ENCODE measurements at regions of chr6 and their contacts with region 1.

Region 1: GRCh38 chr6:116268589-116269293 is 11.0 kb downstream of the TSPYL1 start:
- H3K4me3 ChIP-seq: no peak overlapping the region
- H3K27ac ChIP-seq: no peak overlapping the region
- H3K4me1 ChIP-seq: no peaks in the 10 kb centered on the region
- CTCF ChIP-seq: peak; percentile 76

Region 2: DNA sequence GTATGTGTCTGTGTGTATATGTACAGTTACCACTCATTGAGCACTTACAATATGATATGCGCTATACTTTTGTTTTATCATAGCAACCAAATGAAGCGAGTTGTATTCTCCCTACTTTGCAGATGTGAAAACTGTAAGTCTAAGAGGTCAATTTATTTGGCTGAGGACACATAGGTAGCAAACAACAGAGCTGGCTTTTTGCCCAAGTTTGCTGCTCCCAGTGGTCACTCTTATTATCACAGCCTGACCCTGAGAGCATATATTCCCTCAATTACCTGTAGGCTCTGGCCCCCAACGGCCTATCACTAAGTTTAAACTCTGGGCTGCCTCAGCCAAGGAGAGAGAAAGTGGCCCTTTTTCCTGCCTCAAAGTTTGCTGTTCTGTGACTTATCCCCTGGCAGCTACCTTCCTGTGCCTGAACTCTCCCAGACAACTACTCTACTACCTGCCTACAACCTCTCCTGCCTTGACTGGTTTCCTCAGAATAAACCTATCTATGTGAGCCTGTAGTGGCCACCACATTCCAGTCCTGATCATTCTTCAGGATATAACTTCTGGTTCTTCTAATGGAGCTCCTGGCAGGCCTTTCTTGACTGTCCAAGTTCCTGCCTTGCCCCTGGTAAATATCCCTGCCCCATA is 429.9 kb before region 1 on chr6:
- CTCF ChIA-PET with region 1: no interaction called
- POLR2A ChIA-PET with region 1: no interaction called
- H3K4me3 ChIP-seq: no peak overlapping the region
- H3K27ac ChIP-seq: no peak overlapping the region
- H3K4me1 ChIP-seq: no peaks in the 10 kb centered on the region
- CTCF ChIP-seq: no peak

Region 3: DNA sequence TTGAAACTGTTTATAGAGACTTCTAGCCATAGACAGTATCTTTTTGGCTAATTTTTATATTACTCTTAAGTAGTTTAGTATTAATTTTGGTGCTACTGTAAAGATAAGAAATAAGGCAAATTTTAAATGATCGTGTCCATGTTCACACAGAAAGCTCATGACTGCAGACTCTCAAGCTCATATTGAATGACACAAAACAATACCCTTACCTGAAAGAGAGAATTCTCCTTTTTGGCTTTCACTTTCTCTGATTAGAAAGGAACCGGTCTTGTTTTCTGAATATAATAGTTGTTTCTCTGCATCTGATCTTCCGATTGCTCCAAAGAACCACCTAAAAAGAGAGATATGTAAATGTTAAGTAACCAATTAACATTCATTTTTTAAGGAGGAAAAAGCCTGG is 265.1 kb before region 1 on chr6:
- CTCF ChIA-PET with region 1: no interaction called
- POLR2A ChIA-PET with region 1: no interaction called
- H3K4me3 ChIP-seq: no peak overlapping the region
- H3K27ac ChIP-seq: no peak overlapping the region
- H3K4me1 ChIP-seq: no peaks in the 10 kb centered on the region
- CTCF ChIP-seq: no peak

Region 4: DNA sequence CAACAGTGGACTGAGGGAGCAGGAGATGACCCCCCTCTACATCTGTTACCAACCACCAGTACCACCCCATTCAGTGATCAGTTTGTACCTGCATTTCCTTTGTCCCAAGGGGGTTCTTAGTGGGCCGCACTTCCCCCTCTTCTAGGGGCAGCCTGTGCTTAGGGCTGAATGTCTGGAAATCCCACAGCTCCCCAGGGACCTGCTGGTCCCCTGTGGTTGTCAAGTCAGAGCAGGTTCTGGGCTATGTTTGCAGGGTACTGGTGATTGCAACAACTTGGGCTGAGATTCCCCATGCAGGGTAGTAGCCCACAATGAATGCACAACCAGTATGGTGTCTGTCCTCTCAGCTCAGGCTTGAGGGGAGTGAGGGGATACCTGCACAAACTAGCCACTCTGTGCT is 103.1 kb before region 1 on chr6:
- CTCF ChIA-PET with region 1: no interaction called
- POLR2A ChIA-PET with region 1: no interaction called
- H3K4me3 ChIP-seq: no peak overlapping the region
- H3K27ac ChIP-seq: no peak overlapping the region
- H3K4me1 ChIP-seq: no peaks in the 10 kb centered on the region
- CTCF ChIP-seq: no peak

Region 5: DNA sequence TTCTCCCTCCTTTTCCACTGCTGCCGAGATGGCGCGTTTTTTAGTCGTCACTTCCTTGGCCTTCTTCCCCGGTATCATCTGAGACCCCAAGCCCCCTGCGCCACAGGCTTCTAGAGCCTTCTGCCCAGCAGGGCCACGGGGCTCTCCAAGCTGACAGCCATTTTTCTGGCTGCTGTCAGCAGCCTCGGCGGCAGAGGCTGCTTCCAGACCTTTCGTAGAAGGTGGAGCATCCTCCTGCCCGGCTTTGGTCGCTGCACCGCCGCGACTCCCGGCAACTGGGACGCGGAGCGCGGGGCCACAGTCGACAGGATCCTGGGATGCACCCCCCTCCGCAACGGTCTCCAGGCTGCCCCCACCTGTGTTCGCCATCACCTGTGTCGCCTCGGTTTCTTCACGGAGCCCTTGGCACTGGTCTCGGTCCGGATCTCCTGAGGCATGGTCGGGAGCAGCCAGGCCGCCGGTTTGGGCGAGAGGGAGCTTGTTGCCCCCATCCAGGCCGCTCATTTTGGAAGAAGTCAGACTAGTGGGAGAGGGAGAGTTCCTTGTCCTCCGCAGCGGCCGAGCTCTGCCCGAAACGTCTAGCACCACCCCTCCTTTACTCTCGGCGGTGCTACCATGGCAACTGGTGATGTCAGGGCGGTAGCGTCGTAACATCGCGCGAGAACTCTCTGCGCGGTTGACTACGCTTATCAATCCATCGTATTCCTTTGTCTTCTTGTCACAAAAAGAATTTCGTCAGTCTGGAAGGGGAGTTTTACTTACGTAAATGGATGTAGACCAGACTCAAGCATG is 15.0 kb before region 1 on chr6 and contains the start of gene TSPYL4:
- CTCF ChIA-PET with region 1: interaction called, 41 read pairs
- POLR2A ChIA-PET with region 1: interaction called, 4 read pairs
- H3K4me3 ChIP-seq: peak within 1 kb of the TSS; percentile 88
- H3K27ac ChIP-seq: peak within 1 kb of the TSS; percentile 69
- H3K4me1 ChIP-seq: peaks cover 11% of the 10 kb centered on the region; the same call in 1 of the 2 replicates
- CTCF ChIP-seq: 0 out of 2 replicates have a peak, but pooled peaks have one; percentile 12

Region 6: GRCh38 chr6:116511404-116512110 is 242.8 kb after region 1 on chr6 and contains the start of gene CALHM5:
- CTCF ChIA-PET with region 1: interaction called, 12 read pairs
- POLR2A ChIA-PET with region 1: no interaction called
- H3K4me3 ChIP-seq: peak within 1 kb of the TSS; percentile 27
- H3K27ac ChIP-seq: peak within 1 kb of the TSS; percentile 28
- H3K4me1 ChIP-seq: peaks cover 13% of the 10 kb centered on the region
- CTCF ChIP-seq: peak; percentile 50

Region 7: GRCh38 chr6:116561377-116562018 is 292.8 kb after region 1 on chr6:
- CTCF ChIA-PET with region 1: interaction called, 159 read pairs
- POLR2A ChIA-PET with region 1: no interaction called
- H3K4me3 ChIP-seq: no peak overlapping the region
- H3K27ac ChIP-seq: no peak overlapping the region
- H3K4me1 ChIP-seq: peaks cover 4% of the 10 kb centered on the region; the same call in 1 of the 2 replicates
- CTCF ChIP-seq: peak; percentile 48; the same call in 1 of the 2 replicates

Region 8: DNA sequence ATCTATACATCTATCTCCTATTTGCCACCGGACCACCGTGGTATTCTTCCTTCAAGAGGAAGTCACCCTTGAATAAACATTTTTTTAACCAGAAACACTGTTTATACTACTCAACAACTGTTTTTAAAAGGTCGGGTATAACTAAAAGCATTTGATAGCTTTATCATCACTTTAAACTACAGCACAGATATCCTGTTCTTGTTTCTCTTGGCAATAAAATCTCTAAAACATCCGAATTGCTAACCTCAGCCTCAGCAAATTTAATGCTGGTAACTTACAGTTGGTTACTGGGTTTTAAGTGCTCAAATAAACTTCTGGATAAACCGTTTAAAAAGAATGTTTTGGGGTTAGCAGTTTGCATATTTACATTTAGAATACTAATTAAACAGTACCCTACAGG is 379.4 kb after region 1 on chr6:
- CTCF ChIA-PET with region 1: interaction called, 18 read pairs
- POLR2A ChIA-PET with region 1: no interaction called
- H3K4me3 ChIP-seq: no peak overlapping the region
- H3K27ac ChIP-seq: no peak overlapping the region
- H3K4me1 ChIP-seq: peaks cover 11% of the 10 kb centered on the region
- CTCF ChIP-seq: no peak